Prostate gland (tissue), 2 donors: ENCODE measurements at regions of chr12 and their contacts with region 1.

Region 1: DNA sequence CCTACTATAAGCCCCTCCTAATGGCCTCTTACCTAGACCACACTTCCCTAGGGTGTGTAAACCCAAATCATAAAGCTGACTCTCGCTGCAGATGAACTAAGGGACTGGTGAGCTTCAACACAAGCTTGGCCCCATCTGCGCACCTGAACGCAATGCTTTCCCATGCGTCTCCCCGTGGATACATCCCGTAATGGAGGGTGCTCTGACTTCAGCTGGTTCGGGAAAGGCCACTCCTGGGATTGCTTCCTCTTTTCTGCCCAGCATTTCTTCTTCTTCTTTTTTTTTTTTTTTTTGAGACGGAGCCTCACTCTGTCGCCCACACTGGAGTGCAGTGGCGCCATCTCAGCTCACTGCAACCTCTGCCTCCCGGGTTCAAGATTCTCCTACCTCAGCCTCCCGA is 27.7 kb upstream of the ETFBKMT start:
- DNase-seq: no peak
- H3K4me3 ChIP-seq: no peak overlapping the region
- H3K27ac ChIP-seq: no peak overlapping the region
- H3K4me1 ChIP-seq: no peaks in the 10 kb centered on the region
- H3K27me3 ChIP-seq: no peaks in the 10 kb centered on the region
- CTCF ChIP-seq: no peak
- POLR2A ChIP-seq: no peak

Region 2: DNA sequence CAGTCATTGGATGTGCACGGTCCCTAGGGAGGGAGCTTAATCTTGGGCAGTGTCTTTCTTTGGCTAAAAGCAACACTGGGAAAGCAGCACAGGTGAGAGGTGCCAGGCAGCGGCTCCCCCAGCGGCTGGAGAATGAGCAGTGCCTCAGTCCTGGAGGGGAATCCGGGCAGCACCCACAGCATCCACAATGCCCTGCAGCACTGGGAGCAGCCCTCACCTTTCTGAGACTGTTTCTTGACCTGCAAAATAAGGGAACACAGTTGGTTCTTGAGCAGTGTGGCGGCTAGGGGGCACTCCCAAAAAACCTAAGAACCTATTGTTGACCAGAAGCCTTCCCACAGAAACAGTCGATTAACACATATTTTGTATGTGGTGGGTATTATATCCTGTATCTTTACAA is 381.6 kb before region 1 on chr12:
- intact Hi-C with region 1: loop called (anchors 2 kb)
- DNase-seq: no peak
- H3K4me3 ChIP-seq: no peak overlapping the region
- H3K27ac ChIP-seq: no peak overlapping the region
- H3K4me1 ChIP-seq: no peaks in the 10 kb centered on the region
- H3K27me3 ChIP-seq: no peaks in the 10 kb centered on the region
- CTCF ChIP-seq: no peak
- POLR2A ChIP-seq: no peak

Region 3: GRCh38 chr12:31406345-31406744 is 225.4 kb before region 1 on chr12:
- intact Hi-C with region 1: loop called (anchors 1 kb)
- DNase-seq: no peak
- H3K4me3 ChIP-seq: no peak overlapping the region
- H3K27ac ChIP-seq: no peak overlapping the region
- H3K4me1 ChIP-seq: no peaks in the 10 kb centered on the region
- H3K27me3 ChIP-seq: no peaks in the 10 kb centered on the region
- CTCF ChIP-seq: no peak
- POLR2A ChIP-seq: no peak

Region 4: GRCh38 chr12:31524791-31525495 is 106.8 kb before region 1 on chr12:
- intact Hi-C with region 1: no loop called
- DNase-seq: no peak
- H3K4me3 ChIP-seq: no peak overlapping the region
- H3K27ac ChIP-seq: no peak overlapping the region
- H3K4me1 ChIP-seq: no peaks in the 10 kb centered on the region
- H3K27me3 ChIP-seq: no peaks in the 10 kb centered on the region
- CTCF ChIP-seq: no peak
- POLR2A ChIP-seq: no peak

Region 5: GRCh38 chr12:31570880-31571279 is 60.9 kb before region 1 on chr12:
- intact Hi-C with region 1: no loop called
- DNase-seq: no peak
- H3K4me3 ChIP-seq: no peak overlapping the region
- H3K27ac ChIP-seq: no peak overlapping the region
- H3K4me1 ChIP-seq: no peaks in the 10 kb centered on the region
- H3K27me3 ChIP-seq: no peaks in the 10 kb centered on the region
- CTCF ChIP-seq: no peak
- POLR2A ChIP-seq: no peak

Region 6: DNA sequence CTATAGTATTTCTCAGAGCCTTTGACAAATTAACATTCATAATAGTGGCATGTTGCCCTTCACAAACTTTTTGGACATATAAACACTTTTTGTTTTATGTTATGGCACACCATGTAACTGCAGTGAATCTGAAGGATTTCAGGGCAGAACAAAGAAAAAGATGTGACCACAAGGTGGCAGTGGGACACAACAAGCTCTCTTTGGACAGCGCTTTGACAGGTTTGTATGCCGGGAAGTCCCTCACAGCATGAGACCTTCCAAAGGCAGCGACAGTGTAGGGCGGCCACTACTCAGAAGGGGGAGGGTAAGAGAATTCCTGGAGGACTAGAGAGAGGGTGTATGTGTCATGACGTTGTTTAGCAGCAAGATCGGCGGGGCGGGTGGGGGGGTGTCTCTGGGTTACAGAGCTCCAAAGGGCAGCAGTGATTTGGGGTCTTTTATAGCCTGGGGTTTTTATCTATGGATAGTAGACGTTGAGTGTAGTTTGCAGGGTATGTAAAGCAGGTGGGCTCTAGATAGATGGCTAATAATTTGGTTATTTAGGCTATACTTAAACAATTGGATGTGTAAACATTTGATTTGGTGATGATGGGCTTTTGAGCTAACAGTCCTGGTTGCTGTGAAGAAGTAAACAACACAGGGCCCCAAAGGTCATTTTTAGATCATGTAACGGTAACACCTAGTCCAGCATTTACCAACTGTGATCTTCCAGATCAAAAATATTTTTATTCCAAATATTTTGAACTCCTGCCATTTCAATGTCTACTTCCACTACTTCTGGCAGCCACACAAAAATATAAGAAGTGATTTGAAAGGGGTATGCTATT is 50.6 kb after region 1 on chr12:
- intact Hi-C with region 1: no loop called
- DNase-seq: peak; percentile 11
- H3K4me3 ChIP-seq: no peak overlapping the region
- H3K27ac ChIP-seq: no peak overlapping the region
- H3K4me1 ChIP-seq: no peaks in the 10 kb centered on the region
- H3K27me3 ChIP-seq: no peaks in the 10 kb centered on the region
- CTCF ChIP-seq: peak in 3 of 4 experiments; percentile 44 to 62 (median 53)
- POLR2A ChIP-seq: no peak